IMR-90 (cell line): ENCODE measurements at regions of chrX and their contacts with region 1.

Region 1: GRCh38 chrX:49073601-49074571 is at the start of gene PRAF2:
- DNase-seq: peak; percentile 89
- ATAC-seq: peak; percentile 89
- H3K4me3 ChIP-seq: peak within 1 kb of the TSS; percentile 85
- H3K27ac ChIP-seq: peak within 1 kb of the TSS; percentile 77
- H3K4me1 ChIP-seq: peaks cover under 1% of the 10 kb centered on the region; the same call in 1 of the 2 replicates
- H3K27me3 ChIP-seq: no peaks in the 10 kb centered on the region
- CTCF ChIP-seq: no peak
- POLR2A ChIP-seq: peak; percentile 75; the same call in 1 of the 2 replicates
- RAD21 ChIP-seq: no peak
- total RNA-seq, gene PRAF2: 3.8 and 5.0 TPM in 2 replicates

Region 2: GRCh38 chrX:48957827-48958634 is 115.9 kb before region 1 on chrX:
- CTCF ChIA-PET with region 1: no interaction called
- POLR2A ChIA-PET with region 1: interaction called, 3 read pairs
- dilution Hi-C with region 1: no loop called
- in situ Hi-C with region 1: loop called (anchors 25 kb)
- intact Hi-C with region 1: no loop called
- DNase-seq: peak; percentile 98
- ATAC-seq: peak; percentile 89
- H3K4me3 ChIP-seq: peak overlapping the region; percentile 78
- H3K27ac ChIP-seq: peak overlapping the region; percentile 89
- H3K4me1 ChIP-seq: peaks cover 2% of the 10 kb centered on the region
- H3K27me3 ChIP-seq: no peaks in the 10 kb centered on the region
- CTCF ChIP-seq: no peak
- POLR2A ChIP-seq: peak; percentile 92
- RAD21 ChIP-seq: no peak

Region 3: GRCh38 chrX:49139713-49140112 is 65.8 kb after region 1 on chrX:
- CTCF ChIA-PET with region 1: no interaction called
- POLR2A ChIA-PET with region 1: no interaction called
- dilution Hi-C with region 1: no loop called
- in situ Hi-C with region 1: no loop called
- intact Hi-C with region 1: no loop called
- DNase-seq: no peak
- ATAC-seq: no peak
- H3K4me3 ChIP-seq: no peak overlapping the region
- H3K27ac ChIP-seq: no peak overlapping the region
- H3K4me1 ChIP-seq: no peaks in the 10 kb centered on the region
- H3K27me3 ChIP-seq: no peaks in the 10 kb centered on the region
- CTCF ChIP-seq: no peak
- POLR2A ChIP-seq: no peak
- RAD21 ChIP-seq: no peak

Region 4: GRCh38 chrX:49163555-49164419 is 89.9 kb after region 1 on chrX:
- CTCF ChIA-PET with region 1: no interaction called
- POLR2A ChIA-PET with region 1: no interaction called
- dilution Hi-C with region 1: no loop called
- in situ Hi-C with region 1: no loop called
- intact Hi-C with region 1: loop called (anchors 10 kb)
- DNase-seq: peak; percentile 73
- ATAC-seq: peak; percentile 80
- H3K4me3 ChIP-seq: peak overlapping the region; percentile 46
- H3K27ac ChIP-seq: peak overlapping the region; percentile 93
- H3K4me1 ChIP-seq: peaks cover 9% of the 10 kb centered on the region
- H3K27me3 ChIP-seq: no peaks in the 10 kb centered on the region; the same call in 1 of the 2 replicates
- CTCF ChIP-seq: peak; percentile 75
- POLR2A ChIP-seq: no peak
- RAD21 ChIP-seq: peak; percentile 45

Region 5: GRCh38 chrX:49291615-49292337 is 217.9 kb after region 1 on chrX:
- CTCF ChIA-PET with region 1: no interaction called
- POLR2A ChIA-PET with region 1: no interaction called
- dilution Hi-C with region 1: no loop called
- in situ Hi-C with region 1: no loop called
- intact Hi-C with region 1: no loop called
- DNase-seq: peak; percentile 45
- ATAC-seq: peak; percentile 90
- H3K4me3 ChIP-seq: no peak overlapping the region
- H3K27ac ChIP-seq: no peak overlapping the region
- H3K4me1 ChIP-seq: no peaks in the 10 kb centered on the region
- H3K27me3 ChIP-seq: peaks cover 3% of the 10 kb centered on the region; the same call in 1 of the 2 replicates
- CTCF ChIP-seq: peak; percentile 50
- POLR2A ChIP-seq: no peak
- RAD21 ChIP-seq: peak; percentile 35